MCF 10A (cell line): ENCODE measurements at regions of chr9 and their contacts with region 1.

Region 1: DNA sequence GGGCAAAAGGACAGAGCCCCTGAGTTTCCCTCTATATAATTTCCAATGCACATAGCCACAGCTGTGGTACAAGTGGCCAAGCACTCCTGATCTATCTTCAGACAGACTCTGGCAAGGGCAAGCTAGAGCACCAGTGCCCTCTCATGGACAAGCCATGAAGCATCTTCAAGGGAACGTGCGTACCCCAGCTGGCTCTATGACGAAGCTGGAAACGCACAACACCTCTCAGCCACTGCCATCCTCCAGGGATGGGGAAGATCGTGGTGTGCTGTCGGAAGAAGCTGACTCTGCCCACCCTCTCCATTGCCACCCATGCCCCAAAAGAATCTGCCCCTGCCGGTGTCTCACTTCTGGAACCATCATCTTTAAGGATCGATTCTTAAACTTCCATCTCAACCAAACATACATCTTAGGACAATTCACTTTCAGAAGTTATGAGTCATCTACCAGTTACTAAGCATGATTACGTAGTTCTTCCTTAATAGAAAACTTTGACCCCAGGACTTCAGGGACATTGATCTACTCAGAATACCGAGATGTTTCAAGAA is 482.9 kb downstream of the AGTPBP1 start:
- DNase-seq: peak; percentile 83
- H3K4me3 Mint-ChIP-seq: peak overlapping the region; percentile 7
- H3K27ac Mint-ChIP-seq: no peak overlapping the region
- H3K4me1 Mint-ChIP-seq: peaks cover 5% of the 10 kb centered on the region
- H3K27me3 Mint-ChIP-seq: no peaks in the 10 kb centered on the region
- CTCF ChIP-seq: peak; percentile 96

Region 2: DNA sequence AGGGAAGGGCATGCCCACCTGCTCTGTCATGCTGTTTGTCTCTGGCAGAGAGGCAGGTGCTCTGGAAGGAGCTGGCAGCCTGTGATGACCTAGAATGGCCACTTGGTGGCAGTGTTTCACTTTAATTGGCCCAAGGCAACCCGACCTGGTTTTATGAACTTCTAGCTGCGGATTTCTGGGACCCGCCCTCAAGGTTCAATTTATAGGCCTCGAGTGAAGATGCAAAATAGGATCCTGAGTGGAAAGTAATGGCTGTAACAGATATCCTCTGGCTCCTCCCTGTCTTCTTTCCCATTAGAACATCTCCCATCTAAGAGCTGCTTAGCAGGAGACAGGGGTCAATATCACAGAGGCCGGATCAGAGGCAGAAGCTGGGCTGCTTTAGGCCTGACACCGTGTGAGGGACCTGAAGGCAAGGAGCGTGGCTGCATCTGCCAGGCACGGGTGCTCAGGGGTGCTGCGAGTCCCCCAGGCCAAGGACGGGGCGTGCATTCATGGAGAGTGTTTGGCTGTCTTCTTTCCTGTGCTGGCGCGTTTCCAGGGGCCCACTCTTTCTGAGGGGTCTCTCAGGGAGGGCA is 861.7 kb before region 1 on chr9:
- CTCF ChIA-PET with region 1: interaction called, 30 read pairs
- POLR2A ChIA-PET with region 1: no interaction called
- intact Hi-C with region 1: loop called (anchors 1 kb)
- DNase-seq: peak; percentile 78
- H3K4me3 Mint-ChIP-seq: no peak overlapping the region
- H3K27ac Mint-ChIP-seq: no peak overlapping the region
- H3K4me1 Mint-ChIP-seq: no peaks in the 10 kb centered on the region
- H3K27me3 Mint-ChIP-seq: no peaks in the 10 kb centered on the region
- CTCF ChIP-seq: peak; percentile 87

Region 3: GRCh38 chr9:84697509-84698114 is 561.3 kb before region 1 on chr9:
- CTCF ChIA-PET with region 1: interaction called, 65 read pairs
- POLR2A ChIA-PET with region 1: no interaction called
- intact Hi-C with region 1: loop called (anchors 1 kb)
- DNase-seq: peak; percentile 71
- H3K4me3 Mint-ChIP-seq: no peak overlapping the region
- H3K27ac Mint-ChIP-seq: no peak overlapping the region
- H3K4me1 Mint-ChIP-seq: peaks cover 5% of the 10 kb centered on the region
- H3K27me3 Mint-ChIP-seq: no peaks in the 10 kb centered on the region
- CTCF ChIP-seq: peak; percentile 67

Region 4: GRCh38 chr9:84781458-84781857 is 477.4 kb before region 1 on chr9:
- CTCF ChIA-PET with region 1: interaction called, 3 read pairs
- POLR2A ChIA-PET with region 1: no interaction called
- intact Hi-C with region 1: loop called (anchors 5 kb)
- DNase-seq: peak; percentile 40
- H3K4me3 Mint-ChIP-seq: no peak overlapping the region
- H3K27ac Mint-ChIP-seq: no peak overlapping the region
- H3K4me1 Mint-ChIP-seq: no peaks in the 10 kb centered on the region
- H3K27me3 Mint-ChIP-seq: peaks cover 13% of the 10 kb centered on the region
- CTCF ChIP-seq: peak; percentile 50

Region 5: GRCh38 chr9:84845956-84846900 is 412.7 kb before region 1 on chr9:
- CTCF ChIA-PET with region 1: no interaction called
- POLR2A ChIA-PET with region 1: no interaction called
- intact Hi-C with region 1: no loop called
- DNase-seq: peak; percentile 68
- H3K4me3 Mint-ChIP-seq: no peak overlapping the region
- H3K27ac Mint-ChIP-seq: peak overlapping the region; percentile 16
- H3K4me1 Mint-ChIP-seq: peaks cover 17% of the 10 kb centered on the region
- H3K27me3 Mint-ChIP-seq: no peaks in the 10 kb centered on the region
- CTCF ChIP-seq: no peak

Region 6: GRCh38 chr9:84970432-84970831 is 288.5 kb before region 1 on chr9:
- CTCF ChIA-PET with region 1: no interaction called
- POLR2A ChIA-PET with region 1: interaction called, 3 read pairs
- intact Hi-C with region 1: loop called (anchors 1 kb)
- DNase-seq: peak; percentile 83
- H3K4me3 Mint-ChIP-seq: no peak overlapping the region
- H3K27ac Mint-ChIP-seq: peak overlapping the region; percentile 37
- H3K4me1 Mint-ChIP-seq: peaks cover 28% of the 10 kb centered on the region
- H3K27me3 Mint-ChIP-seq: no peaks in the 10 kb centered on the region
- CTCF ChIP-seq: no peak

Region 7: DNA sequence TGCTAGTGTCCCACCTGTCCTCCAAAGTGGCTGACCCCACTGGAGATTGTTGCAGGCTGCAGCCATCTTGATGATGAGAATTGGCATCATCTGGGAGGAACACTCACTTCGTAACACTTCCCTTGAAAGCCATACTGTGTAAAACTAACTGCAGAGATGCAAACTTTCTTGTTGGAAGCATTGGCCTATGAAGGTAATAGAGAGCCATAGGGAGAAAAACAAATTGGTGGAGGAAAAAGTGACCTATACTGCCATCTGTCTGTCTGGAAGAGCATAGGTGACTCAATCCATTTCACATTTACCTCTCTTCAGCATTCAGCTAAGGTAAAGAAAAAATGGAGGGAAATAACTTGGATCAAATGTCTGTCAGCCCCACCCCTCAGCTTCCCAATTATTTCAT is 115.9 kb before region 1 on chr9:
- CTCF ChIA-PET with region 1: interaction called, 10 read pairs
- POLR2A ChIA-PET with region 1: no interaction called
- intact Hi-C with region 1: loop called (anchors 2 kb)
- DNase-seq: peak; percentile 37
- H3K4me3 Mint-ChIP-seq: no peak overlapping the region
- H3K27ac Mint-ChIP-seq: no peak overlapping the region
- H3K4me1 Mint-ChIP-seq: peaks cover 15% of the 10 kb centered on the region
- H3K27me3 Mint-ChIP-seq: no peaks in the 10 kb centered on the region
- CTCF ChIP-seq: peak; percentile 50

Region 8: GRCh38 chr9:85610074-85610860 is 351.4 kb after region 1 on chr9:
- CTCF ChIA-PET with region 1: interaction called, 6 read pairs
- POLR2A ChIA-PET with region 1: no interaction called
- intact Hi-C with region 1: loop called (anchors 1 kb)
- DNase-seq: peak; percentile 78
- H3K4me3 Mint-ChIP-seq: peak overlapping the region; percentile 69
- H3K27ac Mint-ChIP-seq: peak overlapping the region; percentile 61
- H3K4me1 Mint-ChIP-seq: peaks cover 6% of the 10 kb centered on the region
- H3K27me3 Mint-ChIP-seq: no peaks in the 10 kb centered on the region
- CTCF ChIP-seq: peak; percentile 61